Activated CD4-positive, alpha-beta memory T cell treated with anti-CD3 and anti-CD28 coated beads for 36 hours (primary cell): ENCODE measurements at regions of chr14 and their contacts with region 1.

Region 1: GRCh38 chr14:24806061-24806678 is 172.2 kb upstream of the GZMB start:
- DNase-seq: peak; percentile 56
- H3K4me3 Mint-ChIP-seq: no peak overlapping the region
- H3K27ac Mint-ChIP-seq: no peak overlapping the region
- H3K4me1 Mint-ChIP-seq: no peaks in the 10 kb centered on the region
- H3K27me3 Mint-ChIP-seq: peaks cover 2% of the 10 kb centered on the region

Region 2: DNA sequence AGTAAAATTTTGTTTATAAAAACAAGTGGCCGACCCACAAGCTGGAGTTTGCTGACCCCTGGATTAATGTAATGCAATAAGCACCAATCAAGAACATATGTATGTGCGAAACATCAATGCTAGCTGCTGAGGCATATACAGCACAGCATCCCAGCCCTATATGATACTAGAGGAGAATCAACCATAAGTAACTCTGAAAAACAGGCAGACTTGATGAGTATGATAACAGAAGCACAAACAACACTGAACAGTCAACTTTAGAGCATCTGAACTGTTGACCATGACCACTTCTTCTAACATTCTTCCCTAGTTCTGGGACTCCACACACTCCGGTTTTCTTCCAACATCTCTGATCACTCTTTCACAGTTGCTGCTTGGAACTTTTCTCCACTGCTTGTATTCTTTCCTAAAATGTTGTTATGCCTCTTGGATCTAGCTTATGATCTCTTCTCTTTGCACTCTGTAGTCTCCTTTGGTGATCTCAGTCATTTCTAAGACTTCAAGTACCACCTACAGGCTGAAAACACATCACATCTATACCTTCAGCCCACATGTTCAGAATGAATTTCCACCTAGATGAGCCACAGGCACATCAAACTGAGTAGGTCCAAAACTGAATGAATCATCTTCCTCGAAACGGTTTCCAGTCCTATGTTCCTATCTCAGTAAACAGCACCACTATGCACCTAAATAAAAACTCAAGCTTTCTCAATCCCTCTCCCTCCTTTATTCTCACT is 186.6 kb after region 1 on chr14:
- CTCF ChIA-PET with region 1: no interaction called
- POLR2A ChIA-PET with region 1: no interaction called
- intact Hi-C with region 1: loop called (anchors 5 kb)
- DNase-seq: no peak
- H3K4me3 Mint-ChIP-seq: no peak overlapping the region
- H3K27ac Mint-ChIP-seq: no peak overlapping the region
- H3K4me1 Mint-ChIP-seq: no peaks in the 10 kb centered on the region
- H3K27me3 Mint-ChIP-seq: peaks cover 3% of the 10 kb centered on the region

Region 3: GRCh38 chr14:25132732-25133422 is 326.7 kb after region 1 on chr14:
- CTCF ChIA-PET with region 1: interaction called, 7 read pairs
- POLR2A ChIA-PET with region 1: no interaction called
- intact Hi-C with region 1: loop called (anchors 2 kb)
- DNase-seq: peak; percentile 54
- H3K4me3 Mint-ChIP-seq: no peak overlapping the region
- H3K27ac Mint-ChIP-seq: no peak overlapping the region
- H3K4me1 Mint-ChIP-seq: peaks cover 3% of the 10 kb centered on the region
- H3K27me3 Mint-ChIP-seq: peaks cover 28% of the 10 kb centered on the region

Region 4: DNA sequence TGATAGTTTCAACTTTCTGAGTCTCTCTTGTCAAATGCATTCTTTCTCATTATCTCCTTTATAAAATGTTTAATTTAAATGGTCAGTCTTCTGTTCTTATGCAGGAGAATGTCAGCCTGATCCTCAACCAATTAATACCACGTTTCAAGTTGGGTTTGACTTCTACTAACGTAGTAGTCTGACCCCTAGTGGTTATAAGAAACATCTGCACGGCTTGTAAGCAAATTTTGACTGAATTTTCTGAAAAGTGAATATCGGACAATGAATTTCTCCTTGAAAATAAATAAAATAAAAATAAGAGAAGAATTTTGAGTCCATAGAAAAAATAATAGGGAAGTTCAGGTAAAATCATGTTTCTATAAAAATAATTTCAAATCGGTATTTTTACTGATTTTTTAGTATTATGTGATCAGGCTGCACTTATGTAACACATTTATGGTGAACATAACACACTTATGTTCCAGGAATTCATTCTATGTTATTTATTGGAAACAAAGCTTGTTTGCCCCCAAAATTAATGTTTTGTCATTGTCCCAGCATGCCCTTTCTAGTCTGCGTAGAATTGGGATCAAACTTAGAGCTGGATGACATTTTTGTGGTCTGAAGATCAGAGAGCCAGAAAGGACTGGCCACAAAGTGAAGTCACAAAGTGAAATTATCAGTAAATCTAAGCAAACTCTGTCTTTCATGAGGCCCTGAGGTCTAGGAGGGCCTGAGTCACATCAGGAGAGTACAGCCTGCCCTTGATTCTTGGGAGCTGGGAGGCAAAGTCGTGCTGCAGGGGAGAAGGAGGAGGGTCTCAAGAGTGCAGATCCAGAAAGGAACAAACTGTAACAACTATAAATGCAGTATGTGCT is 345.0 kb after region 1 on chr14:
- CTCF ChIA-PET with region 1: interaction called, 3 read pairs
- POLR2A ChIA-PET with region 1: no interaction called
- intact Hi-C with region 1: loop called (anchors 5 kb)
- DNase-seq: no peak
- H3K4me3 Mint-ChIP-seq: no peak overlapping the region
- H3K27ac Mint-ChIP-seq: no peak overlapping the region
- H3K4me1 Mint-ChIP-seq: no peaks in the 10 kb centered on the region
- H3K27me3 Mint-ChIP-seq: peaks cover 3% of the 10 kb centered on the region